CD8-positive, alpha-beta T cell (primary cell): ENCODE measurements at regions of chr11 and their contacts with region 1.

Region 1: GRCh38 chr11:38510041-38510440 is 1912.0 kb upstream of the RAG2 start:
- DNase-seq: no peak
- ATAC-seq: no peak
- H3K4me3 ChIP-seq: no peak overlapping the region
- H3K4me3 Mint-ChIP-seq: no peak overlapping the region
- H3K27ac ChIP-seq: no peak overlapping the region
- H3K27ac Mint-ChIP-seq: no peak overlapping the region
- H3K4me1 ChIP-seq: no peaks in the 10 kb centered on the region
- H3K4me1 Mint-ChIP-seq: no peaks in the 10 kb centered on the region
- H3K27me3 ChIP-seq: no peaks in the 10 kb centered on the region
- H3K27me3 Mint-ChIP-seq: no peaks in the 10 kb centered on the region
- CTCF ChIP-seq: no peak

Region 2: DNA sequence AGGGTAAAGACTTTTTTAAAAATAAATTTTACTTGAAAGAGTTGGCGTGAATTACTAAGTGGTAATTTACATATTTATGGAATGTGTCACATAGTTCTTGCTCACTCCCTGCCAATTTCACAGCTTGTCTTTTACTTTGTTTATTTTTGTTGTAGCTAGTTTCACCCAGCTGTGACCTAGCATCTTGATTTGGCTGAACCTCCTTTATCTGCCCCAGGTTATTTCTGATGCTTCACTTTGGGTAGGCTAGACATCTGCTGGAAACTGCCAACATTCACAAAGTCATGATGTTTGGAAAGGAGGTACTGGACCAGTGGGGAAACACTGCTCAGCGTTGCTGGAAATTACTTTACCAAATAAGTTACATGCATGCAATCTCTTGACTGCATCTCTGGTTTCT is 236.0 kb before region 1 on chr11:
- CTCF ChIA-PET with region 1: no interaction called
- POLR2A ChIA-PET with region 1: no interaction called
- intact Hi-C with region 1: no loop called
- DNase-seq: no peak
- ATAC-seq: no peak
- H3K4me3 ChIP-seq: no peak overlapping the region
- H3K4me3 Mint-ChIP-seq: no peak overlapping the region
- H3K27ac ChIP-seq: no peak overlapping the region
- H3K27ac Mint-ChIP-seq: no peak overlapping the region
- H3K4me1 ChIP-seq: no peaks in the 10 kb centered on the region
- H3K4me1 Mint-ChIP-seq: no peaks in the 10 kb centered on the region
- H3K27me3 ChIP-seq: no peaks in the 10 kb centered on the region
- H3K27me3 Mint-ChIP-seq: no peaks in the 10 kb centered on the region
- CTCF ChIP-seq: no peak

Region 3: GRCh38 chr11:38448284-38448683 is 61.8 kb before region 1 on chr11:
- CTCF ChIA-PET with region 1: no interaction called
- POLR2A ChIA-PET with region 1: no interaction called
- intact Hi-C with region 1: no loop called
- DNase-seq: no peak
- ATAC-seq: no peak
- H3K4me3 ChIP-seq: no peak overlapping the region
- H3K4me3 Mint-ChIP-seq: no peak overlapping the region
- H3K27ac ChIP-seq: no peak overlapping the region
- H3K27ac Mint-ChIP-seq: no peak overlapping the region
- H3K4me1 ChIP-seq: no peaks in the 10 kb centered on the region
- H3K4me1 Mint-ChIP-seq: no peaks in the 10 kb centered on the region
- H3K27me3 ChIP-seq: no peaks in the 10 kb centered on the region
- H3K27me3 Mint-ChIP-seq: no peaks in the 10 kb centered on the region
- CTCF ChIP-seq: no peak

Region 4: GRCh38 chr11:38553148-38553547 is 43.1 kb after region 1 on chr11:
- CTCF ChIA-PET with region 1: no interaction called
- POLR2A ChIA-PET with region 1: no interaction called
- intact Hi-C with region 1: loop called in 1 of 2 experiments (anchors 1 kb)
- DNase-seq: no peak
- ATAC-seq: no peak
- H3K4me3 ChIP-seq: no peak overlapping the region
- H3K4me3 Mint-ChIP-seq: no peak overlapping the region
- H3K27ac ChIP-seq: no peak overlapping the region
- H3K27ac Mint-ChIP-seq: no peak overlapping the region
- H3K4me1 ChIP-seq: no peaks in the 10 kb centered on the region
- H3K4me1 Mint-ChIP-seq: no peaks in the 10 kb centered on the region
- H3K27me3 ChIP-seq: no peaks in the 10 kb centered on the region
- H3K27me3 Mint-ChIP-seq: no peaks in the 10 kb centered on the region
- CTCF ChIP-seq: no peak

Region 5: GRCh38 chr11:38751421-38751820 is 241.4 kb after region 1 on chr11:
- CTCF ChIA-PET with region 1: no interaction called
- POLR2A ChIA-PET with region 1: no interaction called
- intact Hi-C with region 1: no loop called
- DNase-seq: no peak
- ATAC-seq: no peak
- H3K4me3 ChIP-seq: no peak overlapping the region
- H3K4me3 Mint-ChIP-seq: no peak overlapping the region
- H3K27ac ChIP-seq: no peak overlapping the region
- H3K27ac Mint-ChIP-seq: no peak overlapping the region
- H3K4me1 ChIP-seq: no peaks in the 10 kb centered on the region
- H3K4me1 Mint-ChIP-seq: no peaks in the 10 kb centered on the region
- H3K27me3 ChIP-seq: no peaks in the 10 kb centered on the region
- H3K27me3 Mint-ChIP-seq: no peaks in the 10 kb centered on the region
- CTCF ChIP-seq: no peak